Common myeloid progenitor, CD34-positive (primary cell): ENCODE measurements at regions of chr18 and their contacts with region 1.

Region 1: DNA sequence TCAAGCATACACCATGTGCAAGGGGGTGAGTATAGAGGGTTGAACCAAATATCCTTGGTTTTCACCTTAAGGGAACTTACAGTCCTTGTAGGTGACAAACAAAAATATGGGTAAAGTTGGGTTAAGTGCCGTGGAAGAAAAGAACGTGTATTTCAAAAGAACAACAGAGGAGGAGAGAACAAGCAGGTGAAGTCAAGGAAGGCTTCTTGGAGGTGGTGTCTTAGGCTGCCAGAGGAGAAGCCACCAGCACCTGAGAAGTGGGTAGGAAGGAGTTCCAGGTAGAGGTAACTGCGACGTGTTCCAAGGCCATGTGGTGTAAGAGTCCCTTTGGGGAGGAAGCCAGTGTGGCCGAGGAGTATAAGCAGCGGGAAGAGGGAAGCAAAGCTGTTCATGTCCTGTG is 27.2 kb downstream of the CABLES1 start:
- DNase-seq: no peak
- H3K4me3 ChIP-seq: no peak overlapping the region
- H3K27ac ChIP-seq: no peak overlapping the region
- H3K4me1 ChIP-seq: peaks cover 0 to 3% (median 0%) of the 10 kb centered on the region in 4 experiments
- H3K27me3 ChIP-seq: no peaks in the 10 kb centered on the region

Region 2: GRCh38 chr18:23146861-23147469 is 15.5 kb before region 1 on chr18:
- CTCF ChIA-PET with region 1: interaction called, 12 read pairs
- POLR2A ChIA-PET with region 1: interaction called, 3 read pairs
- DNase-seq: no peak
- H3K4me3 ChIP-seq: no peak overlapping the region
- H3K27ac ChIP-seq: no peak overlapping the region
- H3K4me1 ChIP-seq: peaks cover 3 to 43% (median 38%) of the 10 kb centered on the region in 4 experiments
- H3K27me3 ChIP-seq: no peaks in the 10 kb centered on the region

Region 3: GRCh38 chr18:23207191-23207955 is 44.9 kb after region 1 on chr18:
- CTCF ChIA-PET with region 1: no interaction called
- POLR2A ChIA-PET with region 1: no interaction called
- DNase-seq: peak; percentile 46 to 56 (median 50)
- H3K4me3 ChIP-seq: no peak overlapping the region
- H3K27ac ChIP-seq: no peak overlapping the region
- H3K4me1 ChIP-seq: peaks cover 0 to 18% (median 9%) of the 10 kb centered on the region in 4 experiments
- H3K27me3 ChIP-seq: no peaks in the 10 kb centered on the region

Region 4: GRCh38 chr18:23356915-23357601 is 194.6 kb after region 1 on chr18:
- CTCF ChIA-PET with region 1: no interaction called
- POLR2A ChIA-PET with region 1: no interaction called
- DNase-seq: no peak
- H3K4me3 ChIP-seq: no peak overlapping the region
- H3K27ac ChIP-seq: no peak overlapping the region
- H3K4me1 ChIP-seq: peaks cover 2 to 46% (median 31%) of the 10 kb centered on the region in 4 experiments
- H3K27me3 ChIP-seq: no peaks in the 10 kb centered on the region